GM12878 (cell line): ENCODE measurements at regions of chr3 and their contacts with region 1.

Region 1: DNA sequence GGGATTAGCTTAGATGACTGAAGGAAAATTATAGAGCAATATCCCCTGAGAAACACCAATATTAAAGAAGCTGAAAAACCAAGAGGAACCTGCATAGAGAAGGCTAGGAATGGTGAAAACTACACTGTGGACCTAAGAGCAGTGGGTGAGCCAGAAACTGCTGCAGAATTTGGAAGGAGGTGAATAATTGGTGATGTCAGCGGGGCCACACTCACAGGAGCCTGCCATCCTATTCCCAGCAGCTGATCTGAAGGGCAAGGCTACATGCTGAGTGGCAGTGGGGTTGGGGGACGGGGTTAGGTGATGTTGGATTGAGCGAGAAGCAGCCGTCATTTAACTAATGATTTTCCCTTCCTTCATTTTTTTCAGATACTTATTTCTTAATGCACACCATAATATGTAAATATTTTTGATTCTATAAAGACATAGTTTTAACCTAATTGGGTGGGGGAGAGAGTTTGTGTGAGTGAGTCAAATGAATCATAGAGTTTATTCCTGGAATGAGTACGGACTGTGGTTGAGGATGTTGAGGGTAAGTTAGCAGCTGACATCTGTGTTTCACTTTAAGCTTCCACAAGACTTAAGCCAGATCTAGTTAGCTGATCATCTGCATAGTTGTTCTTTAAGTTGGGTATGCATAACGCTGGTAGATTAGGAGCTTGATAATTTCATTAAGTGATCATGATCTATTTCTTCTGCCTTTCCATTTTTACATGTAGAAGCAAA is 222.8 kb downstream of the PTPRG start:
- DNase-seq: no peak
- ATAC-seq: peak; percentile 77
- H3K4me3 ChIP-seq: no peak overlapping the region
- H3K27ac ChIP-seq: no peak overlapping the region
- H3K4me1 ChIP-seq: no peaks in the 10 kb centered on the region
- H3K27me3 ChIP-seq: no peaks in the 10 kb centered on the region; a peak in 1 of 4 replicates
- CTCF ChIP-seq: no peak
- EP300 ChIP-seq: no peak
- POLR2A ChIP-seq: no peak
- RAD21 ChIP-seq: no peak

Region 2: GRCh38 chr3:61768284-61769037 is 15.7 kb before region 1 on chr3:
- CTCF ChIA-PET with region 1: interaction called, 22 read pairs
- POLR2A ChIA-PET with region 1: interaction called, 4 read pairs
- RAD21 ChIA-PET with region 1: interaction called, 10 read pairs
- SMC1A ChIA-PET with region 1: interaction called, 50 read pairs
- in situ Hi-C with region 1: no loop called
- intact Hi-C with region 1: no loop called
- DNase-seq: no peak
- ATAC-seq: peak; percentile 57
- H3K4me3 ChIP-seq: no peak overlapping the region
- H3K27ac ChIP-seq: no peak overlapping the region
- H3K4me1 ChIP-seq: no peaks in the 10 kb centered on the region
- H3K27me3 ChIP-seq: peaks cover 0 to 3% of the 10 kb centered on the region in 2 experiments; a peak in 1 of 4 replicates
- CTCF ChIP-seq: no peak
- EP300 ChIP-seq: no peak
- POLR2A ChIP-seq: no peak
- RAD21 ChIP-seq: no peak